Activated CD4-positive, alpha-beta memory T cell treated with anti-CD3 and anti-CD28 coated beads for 36 hours (primary cell): ENCODE measurements at regions of chr21 and their contacts with region 1.

Region 1: DNA sequence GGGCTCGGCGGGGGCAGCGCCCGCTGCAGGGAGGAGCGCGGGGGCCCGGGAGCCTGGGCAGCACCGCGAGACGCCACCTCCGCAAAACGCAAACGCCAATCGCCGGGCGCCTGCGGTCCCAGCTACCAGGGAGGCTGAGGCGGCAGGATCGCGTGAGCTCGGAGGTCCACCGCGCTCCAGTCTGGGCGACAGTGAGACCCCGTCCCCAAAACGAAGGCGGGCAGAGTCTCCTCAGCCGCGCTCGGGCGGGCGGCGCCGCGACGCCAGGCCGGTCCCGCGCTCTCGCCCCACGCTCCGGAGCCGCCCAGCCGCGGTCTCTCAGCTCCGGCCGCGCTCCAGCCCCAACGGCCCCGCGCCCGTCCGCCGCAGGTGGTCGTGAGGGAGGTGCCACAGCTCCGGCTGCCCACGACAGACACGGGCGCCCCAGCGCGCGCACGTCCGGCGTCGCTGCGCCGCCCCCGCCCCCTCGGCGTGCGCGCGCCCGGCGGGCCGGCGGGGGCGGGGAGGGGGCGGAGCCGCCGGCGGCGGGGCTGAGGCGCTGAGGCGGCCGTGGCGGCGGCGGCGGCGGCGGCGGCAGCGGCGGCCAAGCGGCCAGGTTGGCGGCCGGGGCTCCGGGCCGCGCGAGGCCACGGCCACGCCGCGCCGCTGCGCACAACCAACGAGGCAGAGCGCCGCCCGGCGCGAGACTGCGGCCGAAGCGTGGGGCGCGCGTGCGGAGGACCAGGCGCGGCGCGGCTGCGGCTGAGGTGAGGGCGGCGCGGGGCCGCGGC is at the start of gene ADARB1:
- DNase-seq: peak; percentile 64
- H3K4me3 Mint-ChIP-seq: peak within 1 kb of the TSS; percentile 84
- H3K27ac Mint-ChIP-seq: peak within 1 kb of the TSS; percentile 75
- H3K4me1 Mint-ChIP-seq: peaks cover 43% of the 10 kb centered on the region
- H3K27me3 Mint-ChIP-seq: no peaks in the 10 kb centered on the region
- total RNA-seq, gene ADARB1: 37.6 to 40.6 TPM

Region 2: DNA sequence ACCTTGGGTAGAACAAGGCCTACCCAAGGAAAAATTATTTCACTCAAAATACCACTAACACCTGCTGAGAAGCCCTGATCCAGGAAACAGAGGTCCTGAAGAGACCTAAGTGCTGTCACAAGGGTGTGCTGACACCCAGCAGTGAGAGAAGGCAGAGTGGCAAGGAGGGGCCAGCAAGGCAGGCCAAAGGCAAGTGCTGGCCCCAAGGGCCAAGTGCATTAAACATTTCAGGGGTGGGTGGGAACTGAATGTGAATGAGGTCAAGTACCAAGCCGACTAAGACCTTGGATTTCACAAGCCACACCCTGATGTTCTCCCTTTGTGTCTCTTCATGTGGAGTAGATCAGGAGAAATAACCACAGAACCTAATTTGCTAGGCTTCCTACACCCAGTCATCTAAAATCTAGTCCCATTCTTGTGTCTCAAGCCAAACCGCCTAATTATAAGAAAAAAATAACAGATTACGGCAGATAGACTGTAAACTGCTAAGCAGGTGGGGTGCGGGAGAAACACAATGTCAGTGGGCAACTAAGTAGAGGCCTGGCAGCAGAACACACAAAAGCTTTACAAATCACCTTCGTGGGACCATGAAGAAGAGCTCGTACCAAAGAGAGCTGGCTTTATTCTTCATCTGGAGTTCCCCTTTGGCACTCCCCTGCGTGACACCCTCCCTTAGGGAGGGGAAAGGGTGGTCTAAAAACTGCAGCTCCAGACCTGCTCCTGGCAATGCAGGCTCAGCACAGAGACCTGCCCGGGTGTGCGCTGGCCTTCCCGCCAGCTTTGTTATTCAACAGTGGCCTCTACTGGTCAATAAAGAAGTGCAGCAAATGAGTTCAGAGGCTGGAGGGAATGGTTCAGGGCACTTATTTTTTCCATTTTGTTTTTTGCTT is 281.3 kb before region 1 on chr21:
- CTCF ChIA-PET with region 1: no interaction called
- POLR2A ChIA-PET with region 1: no interaction called
- intact Hi-C with region 1: no loop called
- DNase-seq: peak; percentile 61
- H3K4me3 Mint-ChIP-seq: no peak overlapping the region
- H3K27ac Mint-ChIP-seq: peak overlapping the region; percentile 18
- H3K4me1 Mint-ChIP-seq: peaks cover 62% of the 10 kb centered on the region
- H3K27me3 Mint-ChIP-seq: no peaks in the 10 kb centered on the region

Region 3: DNA sequence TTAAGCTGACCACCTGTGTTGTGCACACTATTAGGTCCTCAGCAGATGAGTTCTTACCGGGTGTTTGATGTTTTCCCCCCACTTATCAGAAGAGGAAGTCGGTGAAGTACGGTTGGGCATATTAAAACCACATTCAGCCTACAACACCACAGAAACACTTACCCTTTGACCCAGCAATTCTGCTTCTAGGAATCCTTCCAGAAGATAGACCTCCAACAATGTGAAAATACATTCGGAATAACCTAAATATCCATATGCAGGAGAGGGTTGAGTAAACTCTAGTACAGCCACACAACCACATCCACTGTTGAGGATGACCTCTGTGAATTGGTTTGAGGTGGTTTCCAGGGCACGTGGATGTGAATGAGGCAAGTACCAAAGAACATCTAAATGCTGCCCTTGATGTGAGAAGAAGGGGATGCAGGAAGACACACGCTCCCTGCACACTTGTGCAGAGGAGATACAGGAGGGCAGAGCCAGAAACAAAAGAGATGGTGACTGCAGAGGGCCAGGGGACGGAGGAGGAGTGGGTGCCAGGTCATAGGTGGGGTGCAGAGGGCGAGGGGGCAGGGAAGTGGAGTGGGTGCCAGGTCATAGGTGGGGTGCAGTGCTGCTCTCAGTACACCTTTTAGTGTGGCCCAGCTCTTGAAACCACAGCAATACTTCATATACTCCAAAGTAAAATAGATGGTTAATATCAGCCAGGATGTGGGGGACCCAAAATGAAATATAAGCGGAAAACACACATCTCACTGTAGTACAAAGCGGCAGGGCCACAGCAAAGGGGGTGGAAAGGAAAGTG is 13.0 kb after region 1 on chr21:
- CTCF ChIA-PET with region 1: interaction called, 5 read pairs
- POLR2A ChIA-PET with region 1: interaction called, 5 read pairs
- intact Hi-C with region 1: loop called (anchors 1 kb)
- DNase-seq: peak; percentile 54
- H3K4me3 Mint-ChIP-seq: peak overlapping the region; percentile 20
- H3K27ac Mint-ChIP-seq: peak overlapping the region; percentile 64
- H3K4me1 Mint-ChIP-seq: peaks cover 83% of the 10 kb centered on the region
- H3K27me3 Mint-ChIP-seq: no peaks in the 10 kb centered on the region

Region 4: DNA sequence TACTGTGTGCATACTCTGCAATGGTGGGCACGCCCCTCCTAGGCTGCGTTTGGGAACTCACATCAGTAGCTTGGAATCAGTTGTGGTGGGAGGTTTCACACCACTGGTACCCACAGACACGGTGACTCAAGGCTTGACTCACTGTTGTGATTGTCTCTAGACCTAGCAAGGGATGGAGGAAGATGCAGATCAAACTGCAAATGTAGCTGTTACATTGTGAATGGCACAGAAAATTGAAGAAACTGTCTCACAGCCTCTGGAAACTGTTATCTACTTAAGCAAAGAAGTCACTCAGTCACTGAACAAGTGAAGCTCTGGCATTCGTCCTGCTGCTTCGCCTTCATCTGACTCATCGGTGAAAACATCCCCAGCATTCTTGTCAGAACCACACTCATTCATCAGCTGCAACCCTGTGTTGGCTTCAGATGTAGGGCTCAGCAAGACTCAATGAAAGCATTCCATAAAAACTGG is 154.0 kb after region 1 on chr21:
- CTCF ChIA-PET with region 1: no interaction called
- POLR2A ChIA-PET with region 1: no interaction called
- intact Hi-C with region 1: loop called (anchors 5 kb)
- DNase-seq: peak; percentile 90
- H3K4me3 Mint-ChIP-seq: peak overlapping the region; percentile 23
- H3K27ac Mint-ChIP-seq: peak overlapping the region; percentile 66
- H3K4me1 Mint-ChIP-seq: peaks cover 48% of the 10 kb centered on the region
- H3K27me3 Mint-ChIP-seq: peaks cover 7% of the 10 kb centered on the region